ENCODE measurements at regions of chr4 and their contacts with region 1.

Region 1: DNA sequence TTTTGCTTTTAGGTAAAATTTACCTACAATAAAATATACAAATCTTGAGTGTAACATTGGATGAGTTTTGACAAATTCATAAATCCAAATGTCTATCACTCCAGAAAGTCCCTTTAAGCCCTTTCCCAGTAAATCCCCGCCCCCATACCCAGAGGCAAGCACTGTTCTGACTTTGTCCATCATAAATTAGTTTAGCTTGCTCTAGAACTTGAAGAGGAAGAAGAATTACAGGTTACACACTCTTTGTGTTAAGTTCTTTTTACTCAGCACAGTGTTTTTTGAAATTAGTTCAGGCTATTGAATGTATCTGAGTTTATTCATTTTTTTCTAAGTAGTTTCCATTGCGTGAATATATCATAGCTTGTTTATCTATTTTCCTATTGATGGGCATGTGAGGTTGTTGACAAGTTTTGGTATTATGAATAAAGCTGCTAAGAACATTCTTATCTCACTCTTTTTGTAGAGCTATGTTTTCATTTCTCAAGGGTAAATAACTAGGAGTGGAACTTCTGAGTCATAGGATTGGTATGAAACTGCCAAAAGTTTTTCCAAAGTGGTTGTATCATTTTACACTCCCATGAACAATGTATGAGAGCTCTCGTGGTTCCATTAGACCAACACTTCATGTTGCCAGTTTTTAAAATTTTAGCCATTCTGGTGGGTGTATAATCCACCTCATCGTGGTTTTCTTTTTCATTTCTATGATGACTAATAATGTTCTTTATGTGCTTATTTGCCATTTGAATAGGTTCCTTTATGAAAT is 22.4 kb upstream of the HPSE start:
- DNase-seq: no peak
- H3K4me3 Mint-ChIP-seq: peak overlapping the region; percentile 22
- H3K27ac Mint-ChIP-seq: peak overlapping the region; percentile 96
- H3K4me1 Mint-ChIP-seq: peaks cover 15% of the 10 kb centered on the region
- H3K27me3 Mint-ChIP-seq: no peaks in the 10 kb centered on the region

Region 2: GRCh38 chr4:83217721-83218522 is 139.2 kb before region 1 on chr4:
- intact Hi-C with region 1: loop called (anchors 1 kb)
- DNase-seq: peak; percentile 92
- H3K4me3 Mint-ChIP-seq: peak overlapping the region; percentile 69
- H3K27ac Mint-ChIP-seq: peak overlapping the region; percentile 83
- H3K4me1 Mint-ChIP-seq: peaks cover 66% of the 10 kb centered on the region
- H3K27me3 Mint-ChIP-seq: no peaks in the 10 kb centered on the region

Region 3: GRCh38 chr4:83276299-83277040 is 80.6 kb before region 1 on chr4:
- intact Hi-C with region 1: loop called (anchors 1 kb)
- DNase-seq: no peak
- H3K4me3 Mint-ChIP-seq: peak overlapping the region; percentile 33
- H3K27ac Mint-ChIP-seq: peak overlapping the region; percentile 75
- H3K4me1 Mint-ChIP-seq: peaks cover 23% of the 10 kb centered on the region
- H3K27me3 Mint-ChIP-seq: no peaks in the 10 kb centered on the region

Region 4: GRCh38 chr4:83340692-83341343 is 16.3 kb before region 1 on chr4:
- intact Hi-C with region 1: loop called (anchors 1 kb)
- DNase-seq: peak; percentile 87
- H3K4me3 Mint-ChIP-seq: peak overlapping the region; percentile 50
- H3K27ac Mint-ChIP-seq: peak overlapping the region; percentile 93
- H3K4me1 Mint-ChIP-seq: peaks cover 25% of the 10 kb centered on the region
- H3K27me3 Mint-ChIP-seq: peaks cover 26% of the 10 kb centered on the region

Region 5: GRCh38 chr4:83392619-83393018 is 35.5 kb after region 1 on chr4:
- intact Hi-C with region 1: no loop called
- DNase-seq: no peak
- H3K4me3 Mint-ChIP-seq: no peak overlapping the region
- H3K27ac Mint-ChIP-seq: no peak overlapping the region
- H3K4me1 Mint-ChIP-seq: peaks cover 9% of the 10 kb centered on the region
- H3K27me3 Mint-ChIP-seq: peaks cover 10% of the 10 kb centered on the region

Region 6: GRCh38 chr4:83558680-83559079 is 201.6 kb after region 1 on chr4:
- intact Hi-C with region 1: loop called (anchors 2 kb)
- DNase-seq: no peak
- H3K4me3 Mint-ChIP-seq: peak overlapping the region; percentile 46
- H3K27ac Mint-ChIP-seq: peak overlapping the region; percentile 64
- H3K4me1 Mint-ChIP-seq: peaks cover 24% of the 10 kb centered on the region
- H3K27me3 Mint-ChIP-seq: peaks cover 9% of the 10 kb centered on the region